Uterus (tissue), 4 donors: ENCODE measurements at regions of chr7 and their contacts with region 1.

Region 1: GRCh38 chr7:6323967-6324701 is 51.7 kb upstream of the CYTH3 start:
- DNase-seq: no peak
- H3K4me3 ChIP-seq: no peak overlapping the region
- H3K27ac ChIP-seq: no peak overlapping the region
- H3K4me1 ChIP-seq: no peaks in the 10 kb centered on the region
- H3K27me3 ChIP-seq: no peaks in the 10 kb centered on the region
- CTCF ChIP-seq: no peak
- POLR2A ChIP-seq: no peak

Region 2: GRCh38 chr7:6158424-6159096 is 165.6 kb before region 1 on chr7:
- intact Hi-C with region 1: loop called (anchors 5 kb)
- DNase-seq: no peak
- H3K4me3 ChIP-seq: no peak overlapping the region
- H3K27ac ChIP-seq: no peak overlapping the region
- H3K4me1 ChIP-seq: no peaks in the 10 kb centered on the region
- H3K27me3 ChIP-seq: no peaks in the 10 kb centered on the region
- CTCF ChIP-seq: no peak
- POLR2A ChIP-seq: no peak